WTC11 (cell line): ENCODE measurements at regions of chr5 and their contacts with region 1.

Region 1: GRCh38 chr5:157253547-157253946 is 12.4 kb upstream of the CYFIP2 start:
- DNase-seq: peak; percentile 71
- ATAC-seq: peak; percentile 97
- H3K4me3 Mint-ChIP-seq: no peak overlapping the region
- H3K27ac Mint-ChIP-seq: no peak overlapping the region
- H3K4me1 Mint-ChIP-seq: peaks cover 4% of the 10 kb centered on the region; the same call in 1 of the 2 replicates
- H3K27me3 Mint-ChIP-seq: no peaks in the 10 kb centered on the region
- CTCF ChIP-seq: peak; percentile 75

Region 2: GRCh38 chr5:157265714-157266285 is 12.3 kb after region 1 on chr5 and contains the start of gene CYFIP2:
- CTCF ChIA-PET with region 1: interaction called, 18 read pairs
- POLR2A ChIA-PET with region 1: no interaction called
- DNase-seq: peak; percentile 76
- ATAC-seq: peak; percentile 88
- H3K4me3 Mint-ChIP-seq: peak within 1 kb of the TSS; percentile 90
- H3K27ac Mint-ChIP-seq: peak within 1 kb of the TSS; percentile 80
- H3K4me1 Mint-ChIP-seq: peaks cover 44% of the 10 kb centered on the region
- H3K27me3 Mint-ChIP-seq: peaks cover 6% of the 10 kb centered on the region; the same call in 1 of the 2 replicates
- CTCF ChIP-seq: no peak
- total RNA-seq, gene CYFIP2: 95.3 to 102 TPM (median 101 TPM) in 3 replicates